ENCODE measurements at regions of chr16 and their contacts with region 1.

Region 1: GRCh38 chr16:49806446-49806845 is 49.5 kb downstream of the ZNF423 start:
- DNase-seq: no peak
- ATAC-seq: no peak
- H3K4me3 ChIP-seq: no peak overlapping the region
- H3K27ac ChIP-seq: no peak overlapping the region
- H3K4me1 ChIP-seq: peaks cover 23% of the 10 kb centered on the region
- H3K27me3 ChIP-seq: no peaks in the 10 kb centered on the region
- CTCF ChIP-seq: no peak

Region 2: GRCh38 chr16:49786926-49787557 is 19.4 kb before region 1 on chr16:
- intact Hi-C with region 1: loop called in 1 of 2 experiments (anchors 1 kb)
- DNase-seq: no peak
- ATAC-seq: no peak
- H3K4me3 ChIP-seq: no peak overlapping the region
- H3K27ac ChIP-seq: no peak overlapping the region
- H3K4me1 ChIP-seq: peaks cover 21% of the 10 kb centered on the region
- H3K27me3 ChIP-seq: no peaks in the 10 kb centered on the region
- CTCF ChIP-seq: no peak

Region 3: DNA sequence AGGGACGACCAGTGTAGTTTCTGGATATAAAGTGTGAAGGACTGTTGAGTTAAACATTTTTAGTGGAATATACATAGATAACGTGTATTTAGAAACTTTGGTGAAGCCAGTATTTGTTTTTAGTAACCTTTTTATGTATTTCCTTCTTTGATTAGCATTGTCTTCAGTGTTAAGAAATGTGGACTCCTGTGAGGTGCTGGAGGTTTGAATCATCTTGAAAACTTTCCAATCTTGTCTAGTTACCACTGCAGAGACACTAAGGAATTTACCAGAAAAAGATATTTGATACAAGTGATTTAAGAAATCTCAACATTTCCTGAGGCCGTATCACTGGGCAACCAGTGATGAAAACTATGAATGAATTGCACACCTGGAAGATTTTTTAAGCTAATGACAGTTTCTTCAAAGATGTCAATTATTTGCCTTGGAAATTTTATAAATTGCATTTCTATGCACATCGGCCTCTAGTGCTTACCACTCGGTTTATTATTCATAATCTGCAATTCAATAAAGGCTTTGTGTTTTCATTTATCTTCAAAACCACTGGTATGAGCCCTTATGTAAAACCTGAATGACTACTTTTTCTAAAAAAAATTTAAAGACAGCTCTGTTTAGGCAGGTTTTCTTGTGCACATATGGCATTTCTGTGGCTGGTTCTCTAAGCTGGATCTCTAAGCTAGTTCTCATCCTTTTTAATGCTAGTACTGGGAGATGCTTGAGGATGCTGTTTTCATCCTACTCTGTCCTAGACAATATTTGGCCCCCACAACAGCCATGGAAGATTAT is 428.5 kb after region 1 on chr16:
- intact Hi-C with region 1: no loop called
- DNase-seq: no peak
- ATAC-seq: no peak
- H3K4me3 ChIP-seq: no peak overlapping the region
- H3K27ac ChIP-seq: no peak overlapping the region
- H3K4me1 ChIP-seq: peaks cover 12% of the 10 kb centered on the region
- H3K27me3 ChIP-seq: no peaks in the 10 kb centered on the region
- CTCF ChIP-seq: no peak

Region 4: GRCh38 chr16:50335196-50335958 is 528.9 kb after region 1 on chr16:
- intact Hi-C with region 1: no loop called
- DNase-seq: no peak
- ATAC-seq: no peak
- H3K4me3 ChIP-seq: no peak overlapping the region
- H3K27ac ChIP-seq: no peak overlapping the region
- H3K4me1 ChIP-seq: peaks cover 17% of the 10 kb centered on the region
- H3K27me3 ChIP-seq: no peaks in the 10 kb centered on the region
- CTCF ChIP-seq: no peak

Measured in psoas muscle (tissue), 8 donors.